Activated CD4-positive, alpha-beta T cell treated with anti-CD3 and anti-CD28 coated beads, Interleukin-2, amount 10 ng/mL, durations not matched to agents 7 days and 5 days (primary cell): ENCODE measurements at regions of chr4 and their contacts with region 1.

Region 1: GRCh38 chr4:700587-701264 is 4.9 kb upstream of the PCGF3 start:
- DNase-seq: no peak
- H3K4me3 Mint-ChIP-seq: no peak overlapping the region
- H3K27ac Mint-ChIP-seq: no peak overlapping the region
- H3K4me1 Mint-ChIP-seq: peaks cover 24% of the 10 kb centered on the region
- H3K27me3 Mint-ChIP-seq: peaks cover 3% of the 10 kb centered on the region

Region 2: GRCh38 chr4:683982-684622 is 16.6 kb before region 1 on chr4:
- CTCF ChIA-PET with region 1: interaction called, 13 read pairs
- POLR2A ChIA-PET with region 1: no interaction called
- DNase-seq: peak; percentile 39
- H3K4me3 Mint-ChIP-seq: no peak overlapping the region
- H3K27ac Mint-ChIP-seq: no peak overlapping the region
- H3K4me1 Mint-ChIP-seq: peaks cover 10% of the 10 kb centered on the region
- H3K27me3 Mint-ChIP-seq: peaks cover 5% of the 10 kb centered on the region

Region 3: GRCh38 chr4:726235-726787 is 25.6 kb after region 1 on chr4:
- CTCF ChIA-PET with region 1: no interaction called
- POLR2A ChIA-PET with region 1: no interaction called
- DNase-seq: no peak
- H3K4me3 Mint-ChIP-seq: no peak overlapping the region
- H3K27ac Mint-ChIP-seq: no peak overlapping the region
- H3K4me1 Mint-ChIP-seq: peaks cover 5% of the 10 kb centered on the region
- H3K27me3 Mint-ChIP-seq: no peaks in the 10 kb centered on the region

Region 4: GRCh38 chr4:749698-750666 is 49.3 kb after region 1 on chr4:
- CTCF ChIA-PET with region 1: no interaction called
- POLR2A ChIA-PET with region 1: no interaction called
- DNase-seq: no peak
- H3K4me3 Mint-ChIP-seq: no peak overlapping the region
- H3K27ac Mint-ChIP-seq: peak overlapping the region; percentile 19
- H3K4me1 Mint-ChIP-seq: no peaks in the 10 kb centered on the region
- H3K27me3 Mint-ChIP-seq: no peaks in the 10 kb centered on the region